Ovary (tissue), 10 donors: ENCODE measurements at regions of chr22 and their contacts with region 1.

Region 1: GRCh38 chr22:20156611-20157429 is 6.0 kb upstream of the CCDC188 start:
- DNase-seq: peak; percentile 74 to 93 (median 90)
- H3K4me3 ChIP-seq: no peak overlapping the region
- H3K27ac ChIP-seq: no peak overlapping the region
- H3K4me1 ChIP-seq: no peaks in the 10 kb centered on the region
- H3K27me3 ChIP-seq: no peaks in the 10 kb centered on the region
- CTCF ChIP-seq: peak; percentile 99
- EP300 ChIP-seq: no peak
- POLR2A ChIP-seq: no peak

Region 2: DNA sequence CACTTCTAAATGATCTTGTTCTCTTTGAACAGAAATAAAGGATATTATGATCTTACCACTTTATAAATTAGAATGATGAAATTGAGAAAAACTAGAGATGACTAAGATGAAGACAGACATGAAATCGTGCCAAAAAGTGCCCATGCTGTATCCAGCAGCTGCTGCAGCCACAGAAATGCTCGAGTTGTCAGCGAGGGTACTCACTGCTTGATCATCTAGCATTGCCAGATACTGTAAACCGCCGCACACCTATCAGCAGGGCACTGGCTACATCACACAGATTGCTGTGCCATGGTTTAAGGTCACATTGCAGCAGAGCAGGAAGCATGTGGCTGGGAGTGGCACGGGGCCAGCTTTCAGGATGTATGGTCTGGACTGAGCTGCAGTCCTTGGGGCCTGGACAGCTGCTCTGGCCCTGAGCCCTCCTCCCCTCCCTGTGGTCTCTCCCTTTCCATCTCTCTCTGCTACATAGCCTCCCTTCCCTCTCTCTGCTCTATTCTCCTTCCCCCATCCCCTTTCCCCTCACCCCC is 493.5 kb before region 1 on chr22:
- intact Hi-C with region 1: no loop called
- DNase-seq: peak in 3 of 5 donors; percentile 33 to 58 (median 45)
- H3K4me3 ChIP-seq: no peak overlapping the region
- H3K27ac ChIP-seq: no peak overlapping the region
- H3K4me1 ChIP-seq: peaks cover 6% of the 10 kb centered on the region
- H3K27me3 ChIP-seq: no peaks in the 10 kb centered on the region
- CTCF ChIP-seq: no peak
- EP300 ChIP-seq: no peak
- POLR2A ChIP-seq: no peak

Region 3: GRCh38 chr22:20084547-20085413 is 72.0 kb before region 1 on chr22:
- intact Hi-C with region 1: no loop called
- DNase-seq: no peak
- H3K4me3 ChIP-seq: no peak overlapping the region
- H3K27ac ChIP-seq: no peak overlapping the region
- H3K4me1 ChIP-seq: peaks cover 22% of the 10 kb centered on the region
- H3K27me3 ChIP-seq: no peaks in the 10 kb centered on the region
- CTCF ChIP-seq: no peak
- EP300 ChIP-seq: no peak
- POLR2A ChIP-seq: no peak

Region 4: DNA sequence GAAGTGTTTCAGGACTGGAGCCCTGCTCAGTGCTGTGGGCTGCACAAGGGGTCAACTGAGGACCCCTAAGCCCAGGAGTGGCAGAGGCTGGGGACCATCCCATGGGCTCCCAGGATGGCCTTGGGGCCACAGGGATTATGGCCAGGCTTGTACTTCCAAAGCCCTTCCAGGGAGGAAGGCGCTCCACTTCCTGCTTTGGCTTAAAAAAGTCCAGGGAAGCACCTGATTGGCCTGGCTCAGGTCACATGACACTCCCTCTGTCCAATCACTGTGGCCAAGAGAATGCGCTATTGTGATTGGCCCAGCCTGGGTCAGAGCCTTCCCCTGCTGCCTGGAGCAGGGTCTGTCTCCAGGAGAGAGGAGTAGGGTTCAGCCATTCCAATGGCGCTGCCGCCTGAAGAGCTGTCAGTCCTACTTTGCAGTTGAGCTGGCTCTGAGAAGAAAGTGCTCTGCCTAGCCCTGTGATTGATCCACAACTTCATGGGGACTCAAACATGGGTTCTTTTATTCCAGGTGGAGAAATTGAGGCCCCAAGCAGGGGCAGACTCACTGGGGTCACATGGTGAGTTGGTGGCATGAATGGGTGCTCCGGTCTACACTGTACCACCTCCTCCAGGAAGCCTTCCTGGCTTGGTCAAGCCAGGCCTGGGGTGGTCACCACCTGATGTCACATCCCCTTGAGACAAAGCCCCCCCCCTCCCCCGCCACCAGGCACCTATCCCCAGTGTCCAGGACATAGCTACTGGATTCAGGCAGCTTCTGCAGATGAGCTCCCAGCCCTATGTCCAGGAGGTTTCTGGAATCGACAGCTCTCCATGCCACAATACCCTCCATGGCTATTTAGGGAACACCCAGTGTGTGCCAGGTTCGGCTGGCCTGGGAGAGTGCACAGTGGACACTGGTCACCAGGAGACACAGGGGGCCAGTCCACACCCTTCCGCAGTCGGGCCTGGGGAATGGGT is 63.1 kb after region 1 on chr22:
- intact Hi-C with region 1: no loop called
- DNase-seq: no peak
- H3K4me3 ChIP-seq: no peak overlapping the region
- H3K27ac ChIP-seq: no peak overlapping the region
- H3K4me1 ChIP-seq: no peaks in the 10 kb centered on the region
- H3K27me3 ChIP-seq: no peaks in the 10 kb centered on the region
- CTCF ChIP-seq: no peak
- EP300 ChIP-seq: no peak
- POLR2A ChIP-seq: no peak

Region 5: DNA sequence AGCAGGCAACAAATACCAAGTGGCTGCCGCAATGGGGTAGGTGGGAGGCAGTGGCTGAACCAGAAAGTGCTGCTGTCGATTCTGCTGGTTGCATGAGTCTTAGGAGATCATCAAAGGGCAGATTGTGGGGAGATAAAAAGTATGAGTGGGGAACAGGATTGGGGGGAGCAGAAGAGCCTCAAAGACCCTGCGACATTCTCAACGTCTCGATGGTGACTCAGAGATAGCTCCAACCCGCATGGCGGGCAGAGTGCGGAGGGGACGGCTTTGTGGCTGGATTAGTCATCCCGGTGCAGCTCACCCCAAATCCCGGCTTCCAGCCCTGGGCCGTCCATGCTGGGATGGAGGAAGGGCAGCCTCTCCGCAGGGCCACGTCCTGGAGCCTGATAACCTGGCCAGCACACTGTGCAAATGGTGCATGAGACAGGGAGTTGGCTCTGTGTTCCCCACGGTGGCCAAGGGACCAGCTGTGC is 122.9 kb after region 1 on chr22:
- intact Hi-C with region 1: loop called in 2 of 4 experiments (anchors 2 to 5 kb)
- DNase-seq: no peak
- H3K4me3 ChIP-seq: no peak overlapping the region
- H3K27ac ChIP-seq: no peak overlapping the region
- H3K4me1 ChIP-seq: no peaks in the 10 kb centered on the region
- H3K27me3 ChIP-seq: no peaks in the 10 kb centered on the region
- CTCF ChIP-seq: no peak
- EP300 ChIP-seq: no peak
- POLR2A ChIP-seq: no peak